Natural killer cell (primary cell): ENCODE measurements at regions of chr2 and their contacts with region 1.

Region 1: DNA sequence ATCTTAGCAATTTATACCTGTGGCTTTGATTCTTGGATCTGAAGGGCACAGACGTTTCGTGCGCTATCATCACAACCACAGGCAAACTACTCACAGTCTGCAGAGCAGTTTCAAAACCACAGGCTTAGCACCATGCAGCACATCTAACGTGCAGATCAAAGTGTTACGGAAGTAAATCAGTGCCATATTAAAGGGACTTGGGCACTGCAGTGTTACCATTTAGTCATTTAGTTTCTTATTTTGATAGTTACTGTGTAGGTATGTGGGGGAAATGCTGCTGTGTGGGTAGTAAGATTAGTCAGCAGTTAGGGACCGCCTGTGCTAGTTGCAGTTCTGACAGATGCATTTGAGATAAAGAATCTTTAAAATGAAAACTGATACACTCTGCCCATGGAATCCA is 384.0 kb downstream of the NBAS start:
- DNase-seq: peak; percentile 18 to 82
- ATAC-seq: peak; percentile 86 to 91 (median 86)
- H3K4me3 ChIP-seq: no peak overlapping the region
- H3K4me3 Mint-ChIP-seq: peak overlapping the region; percentile 69
- H3K27ac ChIP-seq: no peak overlapping the region
- H3K27ac Mint-ChIP-seq: peak overlapping the region; percentile 70 to 81
- H3K4me1 ChIP-seq: peaks cover 13% of the 10 kb centered on the region
- H3K4me1 Mint-ChIP-seq: peaks cover 26 to 51% of the 10 kb centered on the region in 2 donors
- H3K27me3 ChIP-seq: no peaks in the 10 kb centered on the region
- H3K27me3 Mint-ChIP-seq: peaks cover 0 to 11% of the 10 kb centered on the region in 2 donors
- CTCF ChIP-seq: no peak

Region 2: GRCh38 chr2:14773696-14774095 is 403.4 kb before region 1 on chr2:
- intact Hi-C with region 1: no loop called
- DNase-seq: no peak
- ATAC-seq: no peak
- H3K4me3 ChIP-seq: no peak overlapping the region
- H3K4me3 Mint-ChIP-seq: no peak overlapping the region
- H3K27ac ChIP-seq: no peak overlapping the region
- H3K27ac Mint-ChIP-seq: no peak overlapping the region
- H3K4me1 ChIP-seq: no peaks in the 10 kb centered on the region
- H3K4me1 Mint-ChIP-seq: no peaks in the 10 kb centered on the region
- H3K27me3 ChIP-seq: no peaks in the 10 kb centered on the region
- H3K27me3 Mint-ChIP-seq: no peaks in the 10 kb centered on the region
- CTCF ChIP-seq: no peak

Region 3: DNA sequence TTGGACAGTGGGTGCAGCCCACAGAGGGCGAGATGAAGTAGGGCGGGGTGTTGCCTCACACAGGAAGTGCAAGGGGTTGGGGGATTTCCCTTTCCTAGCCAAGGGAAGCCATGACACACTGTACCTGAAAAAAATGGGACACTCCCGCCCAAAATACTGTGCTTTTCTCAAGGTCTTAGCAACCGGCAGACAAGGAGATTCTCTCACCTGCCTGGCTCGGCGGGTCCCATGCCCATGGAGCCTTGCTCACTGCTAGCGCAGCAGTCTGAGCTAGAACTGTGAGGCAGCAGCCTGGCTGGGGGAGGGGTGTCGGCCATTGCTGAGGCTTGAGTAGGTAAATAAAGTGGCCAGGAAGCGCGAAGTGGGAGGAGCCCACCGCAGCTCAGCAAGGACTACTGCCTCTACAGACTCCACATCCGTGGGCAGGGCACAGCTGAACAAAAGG is 139.3 kb after region 1 on chr2:
- intact Hi-C with region 1: loop called (anchors 5 kb)
- DNase-seq: peak; percentile 47 to 66
- ATAC-seq: peak; percentile 83 to 91 (median 86)
- H3K4me3 ChIP-seq: no peak overlapping the region
- H3K4me3 Mint-ChIP-seq: peak overlapping the region; percentile 82
- H3K27ac ChIP-seq: peak overlapping the region; percentile 63
- H3K27ac Mint-ChIP-seq: peak overlapping the region; percentile 83 to 84
- H3K4me1 ChIP-seq: peaks cover 33% of the 10 kb centered on the region
- H3K4me1 Mint-ChIP-seq: peaks cover 55 to 73% of the 10 kb centered on the region in 2 donors
- H3K27me3 ChIP-seq: no peaks in the 10 kb centered on the region
- H3K27me3 Mint-ChIP-seq: no peaks in the 10 kb centered on the region
- CTCF ChIP-seq: no peak